Naive thymus-derived CD4-positive, alpha-beta T cell (primary cell): ENCODE measurements at regions of chr19 and their contacts with region 1.

Region 1: DNA sequence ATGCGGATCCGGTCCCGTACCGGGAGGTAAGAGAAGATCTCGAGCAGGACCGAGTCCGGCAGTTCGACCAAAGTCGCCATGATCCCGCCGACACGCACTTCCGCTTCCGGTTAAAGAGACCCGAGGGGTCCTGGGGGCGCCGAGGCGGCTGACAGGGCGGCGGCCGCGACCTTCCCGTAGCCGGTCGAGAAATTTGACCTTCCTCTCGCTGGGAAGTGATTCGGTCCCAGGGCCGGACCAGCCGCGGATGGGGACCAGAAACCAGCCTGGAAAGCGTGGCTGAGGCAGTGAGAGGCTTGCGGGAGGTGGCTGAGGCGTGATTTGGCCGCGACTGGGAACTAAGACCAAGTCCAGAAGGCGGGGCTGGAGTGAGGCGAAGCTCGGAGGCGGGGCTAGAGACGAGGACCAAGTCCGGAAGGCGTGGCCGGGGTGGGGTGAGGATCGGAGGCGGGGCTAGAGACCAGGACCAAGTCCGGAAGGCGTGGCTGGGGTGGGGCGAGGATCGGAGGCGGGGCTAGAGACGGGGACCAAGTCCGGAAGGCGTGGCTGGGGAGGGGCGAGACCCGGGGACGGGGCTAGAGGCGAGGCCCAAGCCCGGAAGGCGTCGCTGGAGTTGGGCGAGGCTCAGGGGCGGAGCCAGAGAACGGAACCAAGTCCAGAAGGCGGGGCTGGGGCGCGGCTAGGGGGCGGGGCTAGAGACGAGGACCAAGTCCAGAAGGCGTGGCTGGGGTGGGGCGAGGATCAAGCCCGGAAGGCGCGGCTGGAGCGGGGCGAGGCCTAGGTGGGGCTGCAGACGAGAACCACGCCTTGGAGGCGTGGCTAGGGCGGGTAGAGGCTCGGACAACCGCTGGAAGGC is at the start of gene FBXL12:
- DNase-seq: peak; percentile 99 to 100 (median 100)
- ATAC-seq: peak; percentile 93
- H3K4me3 ChIP-seq: peak within 1 kb of the TSS; percentile 100
- H3K4me3 Mint-ChIP-seq: peak within 1 kb of the TSS; percentile 81 to 96 (median 90)
- H3K27ac ChIP-seq: peak within 1 kb of the TSS; percentile 99
- H3K27ac Mint-ChIP-seq: peak within 1 kb of the TSS; percentile 78 to 97 (median 90)
- H3K4me1 ChIP-seq: peaks cover 9 to 14% of the 10 kb centered on the region in 2 donors
- H3K4me1 Mint-ChIP-seq: peaks cover 19 to 43% (median 30%) of the 10 kb centered on the region in 7 donors
- H3K27me3 ChIP-seq: no peaks in the 10 kb centered on the region
- H3K27me3 Mint-ChIP-seq: no peaks in the 10 kb centered on the region
- total RNA-seq, gene FBXL12: 16.8 to 36.2 (median 34.0) TPM

Region 2: DNA sequence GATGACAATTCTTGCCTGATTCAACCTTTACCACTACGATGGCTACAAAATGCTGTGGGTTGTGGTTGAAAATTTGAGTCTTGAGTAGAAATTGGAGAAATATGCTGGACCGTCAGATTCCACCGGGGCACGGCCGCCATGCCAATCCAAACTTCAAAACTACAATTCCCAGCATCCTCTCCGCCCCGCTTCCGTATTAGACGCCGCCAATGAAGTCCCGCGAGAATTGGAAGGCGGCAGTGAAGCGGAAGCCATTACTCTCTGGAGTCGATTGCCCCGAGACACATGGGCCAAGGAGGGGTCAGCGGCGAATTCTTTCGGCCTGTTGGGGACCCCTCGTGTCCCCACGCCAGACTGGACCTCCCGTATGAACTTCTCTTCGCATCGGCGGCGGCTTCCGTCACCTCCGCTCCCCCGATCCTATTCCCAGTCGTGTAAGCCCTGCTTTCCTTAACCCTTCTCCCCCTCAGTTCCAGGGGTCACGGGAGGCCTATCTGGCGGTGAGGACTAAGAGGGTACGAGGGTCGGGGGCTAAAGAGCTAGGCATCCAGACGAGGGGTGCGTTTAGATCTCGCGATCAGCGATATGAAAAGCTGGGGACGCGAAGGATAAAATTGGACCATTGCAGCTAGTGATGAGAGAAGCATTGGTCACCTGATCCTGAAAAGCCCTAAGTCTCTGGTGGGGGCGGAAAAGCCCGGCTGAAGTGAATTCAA is 678.6 kb before region 1 on chr19 and contains the start of gene ZNF317:
- CTCF ChIA-PET with region 1: no interaction called
- POLR2A ChIA-PET with region 1: no interaction called
- intact Hi-C with region 1: loop called in 1 of 2 experiments (anchors 1 kb)
- DNase-seq: peak; percentile 72 to 94 (median 88)
- ATAC-seq: peak; percentile 94
- H3K4me3 ChIP-seq: peak within 1 kb of the TSS; percentile 94
- H3K4me3 Mint-ChIP-seq: peak within 1 kb of the TSS; percentile 93 to 99 (median 98)
- H3K27ac ChIP-seq: peak within 1 kb of the TSS; percentile 95
- H3K27ac Mint-ChIP-seq: peak within 1 kb of the TSS; percentile 95 to 99 (median 97)
- H3K4me1 ChIP-seq: peaks cover 17 to 21% of the 10 kb centered on the region in 2 donors
- H3K4me1 Mint-ChIP-seq: peaks cover 28 to 55% (median 49%) of the 10 kb centered on the region in 7 donors
- H3K27me3 ChIP-seq: no peaks in the 10 kb centered on the region
- H3K27me3 Mint-ChIP-seq: peaks cover 0 to 7% (median 0%) of the 10 kb centered on the region in 5 donors
- total RNA-seq, gene ZNF317: 39.4 to 75.5 (median 54.5) TPM

Region 3: GRCh38 chr19:9621156-9622037 is 197.6 kb before region 1 on chr19 and contains the start of gene ZNF561:
- CTCF ChIA-PET with region 1: no interaction called
- POLR2A ChIA-PET with region 1: interaction called, 3 read pairs
- intact Hi-C with region 1: loop called (anchors 1 kb)
- DNase-seq: peak; percentile 73 to 93 (median 89)
- ATAC-seq: peak; percentile 94
- H3K4me3 ChIP-seq: peak within 1 kb of the TSS; percentile 96
- H3K4me3 Mint-ChIP-seq: peak within 1 kb of the TSS; percentile 96 to 100 (median 99)
- H3K27ac ChIP-seq: peak within 1 kb of the TSS; percentile 89
- H3K27ac Mint-ChIP-seq: peak within 1 kb of the TSS; percentile 99 to 100 (median 100)
- H3K4me1 ChIP-seq: peaks cover 12 to 13% of the 10 kb centered on the region in 2 donors
- H3K4me1 Mint-ChIP-seq: peaks cover 13 to 34% (median 25%) of the 10 kb centered on the region in 7 donors
- H3K27me3 ChIP-seq: no peaks in the 10 kb centered on the region
- H3K27me3 Mint-ChIP-seq: peaks cover 0 to 4% (median 0%) of the 10 kb centered on the region in 5 donors
- total RNA-seq, gene ZNF561: 35.9 to 72.5 (median 42.3) TPM

Region 4: GRCh38 chr19:9796113-9796773 is 22.7 kb before region 1 on chr19:
- CTCF ChIA-PET with region 1: no interaction called
- POLR2A ChIA-PET with region 1: interaction called, 3 read pairs
- intact Hi-C with region 1: loop called (anchors 1 kb)
- DNase-seq: peak; percentile 55 to 92 (median 87)
- ATAC-seq: peak; percentile 48
- H3K4me3 ChIP-seq: no peak overlapping the region
- H3K4me3 Mint-ChIP-seq: peak overlapping the region in 3 of 10 donors; percentile 16 to 43 (median 16)
- H3K27ac ChIP-seq: peak overlapping the region; percentile 63
- H3K27ac Mint-ChIP-seq: peak overlapping the region; percentile 66 to 97 (median 90)
- H3K4me1 ChIP-seq: peaks cover 0 to 7% of the 10 kb centered on the region in 2 donors
- H3K4me1 Mint-ChIP-seq: peaks cover 15 to 43% (median 34%) of the 10 kb centered on the region in 7 donors
- H3K27me3 ChIP-seq: no peaks in the 10 kb centered on the region
- H3K27me3 Mint-ChIP-seq: peaks cover 0 to 3% (median 0%) of the 10 kb centered on the region in 5 donors

Region 5: GRCh38 chr19:10403137-10404021 is 584.4 kb after region 1 on chr19 and contains the start of gene CDC37:
- CTCF ChIA-PET with region 1: no interaction called
- POLR2A ChIA-PET with region 1: no interaction called
- intact Hi-C with region 1: loop called in 1 of 2 experiments (anchors 5 kb)
- DNase-seq: peak; percentile 95 to 99 (median 97)
- ATAC-seq: peak; percentile 88
- H3K4me3 ChIP-seq: peak within 1 kb of the TSS; percentile 87
- H3K4me3 Mint-ChIP-seq: peak within 1 kb of the TSS; percentile 90 to 97 (median 95)
- H3K27ac ChIP-seq: peak within 1 kb of the TSS; percentile 97
- H3K27ac Mint-ChIP-seq: peak within 1 kb of the TSS; percentile 80 to 97 (median 95)
- H3K4me1 ChIP-seq: peaks cover 55 to 59% of the 10 kb centered on the region in 2 donors
- H3K4me1 Mint-ChIP-seq: peaks cover 40 to 85% (median 59%) of the 10 kb centered on the region in 7 donors
- H3K27me3 ChIP-seq: no peaks in the 10 kb centered on the region
- H3K27me3 Mint-ChIP-seq: peaks cover 0 to 3% (median 0%) of the 10 kb centered on the region in 5 donors
- total RNA-seq, gene CDC37: 169 to 229 (median 180) TPM

Region 6: DNA sequence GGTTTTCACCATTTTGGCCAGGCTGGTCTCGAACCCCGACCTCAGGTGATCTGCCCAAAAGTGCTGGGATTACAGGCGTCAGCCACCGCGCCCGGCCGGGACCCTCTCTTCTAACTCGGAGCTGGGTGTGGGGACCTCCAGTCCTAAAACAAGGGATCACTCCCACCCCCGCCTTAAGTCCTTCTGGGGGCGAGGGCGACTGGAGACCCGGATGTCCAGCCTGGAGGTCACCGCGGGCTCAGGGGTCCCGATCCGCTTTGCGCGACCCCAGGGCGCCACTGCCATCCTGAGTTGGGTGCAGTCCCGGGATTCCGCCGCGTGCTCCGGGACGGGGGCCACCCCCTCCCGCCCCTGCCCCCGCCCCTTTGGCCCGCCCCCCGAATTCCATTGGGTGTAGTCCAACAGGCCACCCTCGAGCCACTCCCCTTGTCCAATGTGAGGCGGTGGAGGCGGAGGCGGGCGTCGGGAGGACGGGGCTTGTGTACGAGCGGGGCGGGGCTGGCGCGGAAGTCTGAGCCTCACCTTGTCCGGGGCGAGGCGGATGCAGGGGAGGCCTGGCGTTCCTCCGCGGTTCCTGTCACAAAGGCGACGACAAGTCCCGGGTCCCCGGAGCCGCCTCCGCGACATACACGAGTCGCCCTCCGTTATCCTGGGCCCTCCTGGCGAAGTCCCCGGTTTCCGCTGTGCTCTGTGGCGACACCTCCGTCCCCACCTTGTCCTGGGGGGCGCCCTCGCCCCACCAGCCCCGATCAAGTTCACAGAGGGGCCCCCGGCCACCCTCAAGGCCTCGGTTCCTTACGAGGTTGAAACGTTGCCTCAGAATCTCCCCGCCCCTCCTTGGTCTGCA is 1271.3 kb after region 1 on chr19:
- CTCF ChIA-PET with region 1: no interaction called
- POLR2A ChIA-PET with region 1: no interaction called
- intact Hi-C with region 1: loop called in 1 of 2 experiments (anchors 2 kb)
- DNase-seq: peak; percentile 89 to 97 (median 96)
- ATAC-seq: peak; percentile 90
- H3K4me3 ChIP-seq: peak overlapping the region; percentile 83
- H3K4me3 Mint-ChIP-seq: peak overlapping the region; percentile 85 to 94 (median 89)
- H3K27ac ChIP-seq: peak overlapping the region; percentile 91
- H3K27ac Mint-ChIP-seq: peak overlapping the region; percentile 88 to 99 (median 96)
- H3K4me1 ChIP-seq: peaks cover 24 to 41% of the 10 kb centered on the region in 2 donors
- H3K4me1 Mint-ChIP-seq: peaks cover 13 to 51% (median 44%) of the 10 kb centered on the region in 7 donors
- H3K27me3 ChIP-seq: no peaks in the 10 kb centered on the region
- H3K27me3 Mint-ChIP-seq: peaks cover 0 to 2% (median 0%) of the 10 kb centered on the region in 5 donors